Ascending aorta (tissue), 2 donors: ENCODE measurements at regions of chr15 and their contacts with region 1.

Region 1: GRCh38 chr15:93087825-93088199 is 1.2 kb downstream of the RGMA start:
- DNase-seq: peak in 1 of 2 donors; percentile 85
- H3K4me3 ChIP-seq: peak overlapping the region; percentile 60 to 79
- H3K27ac ChIP-seq: no peak overlapping the region
- H3K4me1 ChIP-seq: peaks cover 0 to 8% of the 10 kb centered on the region in 2 donors
- H3K27me3 ChIP-seq: peaks cover 8% of the 10 kb centered on the region
- CTCF ChIP-seq: peak; percentile 75 to 91 (median 91)

Region 2: DNA sequence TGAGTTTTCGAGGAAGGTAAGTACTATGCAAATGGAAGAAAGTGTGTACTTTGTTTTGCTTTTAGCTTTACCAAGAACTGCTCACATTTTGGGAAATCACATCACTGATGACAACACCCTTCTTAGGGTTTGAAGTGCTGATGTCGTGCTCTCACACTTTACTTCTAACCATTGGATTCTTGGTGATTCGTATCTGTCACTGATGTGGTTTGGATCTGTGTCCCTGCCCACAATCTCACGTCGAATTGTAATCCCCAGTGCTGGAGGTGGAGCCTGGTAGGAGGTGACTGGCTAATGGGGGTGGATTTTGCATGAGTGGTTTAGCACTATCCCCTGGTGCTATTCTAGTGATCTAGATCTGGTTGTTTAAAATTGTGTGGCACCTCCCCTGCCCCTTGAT is 76.6 kb after region 1 on chr15:
- intact Hi-C with region 1: no loop called
- DNase-seq: no peak
- H3K4me3 ChIP-seq: no peak overlapping the region
- H3K27ac ChIP-seq: no peak overlapping the region
- H3K4me1 ChIP-seq: no peaks in the 10 kb centered on the region
- H3K27me3 ChIP-seq: no peaks in the 10 kb centered on the region
- CTCF ChIP-seq: no peak

Region 3: GRCh38 chr15:93288728-93289294 is 201.0 kb after region 1 on chr15:
- intact Hi-C with region 1: no loop called
- DNase-seq: no peak
- H3K4me3 ChIP-seq: no peak overlapping the region
- H3K27ac ChIP-seq: no peak overlapping the region
- H3K4me1 ChIP-seq: no peaks in the 10 kb centered on the region
- H3K27me3 ChIP-seq: no peaks in the 10 kb centered on the region
- CTCF ChIP-seq: no peak

Region 4: GRCh38 chr15:93321881-93322289 is 234.1 kb after region 1 on chr15:
- intact Hi-C with region 1: loop called (anchors 5 kb)
- DNase-seq: no peak
- H3K4me3 ChIP-seq: no peak overlapping the region
- H3K27ac ChIP-seq: no peak overlapping the region
- H3K4me1 ChIP-seq: no peaks in the 10 kb centered on the region
- H3K27me3 ChIP-seq: no peaks in the 10 kb centered on the region
- CTCF ChIP-seq: no peak

Region 5: DNA sequence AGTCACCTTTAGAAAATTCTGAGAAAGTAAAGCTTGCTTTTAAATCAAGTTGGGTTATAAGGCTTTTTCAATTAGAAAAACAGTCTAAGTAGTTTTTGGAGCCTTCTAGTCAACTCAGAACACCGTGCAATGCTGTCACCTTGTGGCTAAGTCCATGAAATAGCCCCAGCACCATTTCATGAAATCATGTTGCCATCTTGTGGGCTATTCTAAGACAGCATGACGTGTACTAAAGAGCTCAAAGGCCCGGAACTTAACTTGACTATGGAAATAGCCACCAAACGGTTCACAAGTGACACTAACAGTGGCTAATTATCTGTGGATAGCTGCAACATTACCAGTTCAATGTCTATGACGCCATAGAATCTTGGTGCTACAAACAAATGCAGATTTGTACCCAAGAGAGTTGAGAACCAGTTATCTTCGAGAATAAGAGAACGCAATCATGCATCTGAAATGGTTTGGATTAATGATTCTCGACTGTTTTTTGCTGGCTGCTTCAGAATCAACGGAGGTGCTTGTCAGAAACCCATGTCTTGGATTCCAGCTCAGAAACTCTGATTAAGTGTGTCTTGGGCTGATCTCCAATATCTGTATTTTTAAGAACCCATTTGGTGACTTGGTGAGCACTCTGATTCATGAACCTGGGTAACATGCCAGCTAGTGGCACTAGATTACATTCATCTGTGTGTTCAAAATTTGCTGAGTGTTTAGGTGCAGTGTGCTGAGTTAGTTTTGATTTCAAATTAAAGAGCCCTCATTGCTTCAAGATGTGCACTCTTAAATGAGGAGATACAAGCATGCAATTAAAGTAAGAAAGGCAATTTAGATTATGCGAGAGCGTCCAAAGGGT is 1032.3 kb after region 1 on chr15:
- intact Hi-C with region 1: loop called (anchors 2 kb)
- DNase-seq: peak in 1 of 2 donors; percentile 77
- H3K4me3 ChIP-seq: peak overlapping the region in 1 of 2 donors; percentile 20
- H3K27ac ChIP-seq: peak overlapping the region; percentile 59 to 73
- H3K4me1 ChIP-seq: peaks cover 0 to 5% of the 10 kb centered on the region in 2 donors
- H3K27me3 ChIP-seq: no peaks in the 10 kb centered on the region
- CTCF ChIP-seq: peak; percentile 80 to 88 (median 83)